Activated CD4-positive, alpha-beta T cell treated with anti-CD3 and anti-CD28 coated beads for 36 hours (primary cell): ENCODE measurements at regions of chr17 and their contacts with region 1.

Region 1: DNA sequence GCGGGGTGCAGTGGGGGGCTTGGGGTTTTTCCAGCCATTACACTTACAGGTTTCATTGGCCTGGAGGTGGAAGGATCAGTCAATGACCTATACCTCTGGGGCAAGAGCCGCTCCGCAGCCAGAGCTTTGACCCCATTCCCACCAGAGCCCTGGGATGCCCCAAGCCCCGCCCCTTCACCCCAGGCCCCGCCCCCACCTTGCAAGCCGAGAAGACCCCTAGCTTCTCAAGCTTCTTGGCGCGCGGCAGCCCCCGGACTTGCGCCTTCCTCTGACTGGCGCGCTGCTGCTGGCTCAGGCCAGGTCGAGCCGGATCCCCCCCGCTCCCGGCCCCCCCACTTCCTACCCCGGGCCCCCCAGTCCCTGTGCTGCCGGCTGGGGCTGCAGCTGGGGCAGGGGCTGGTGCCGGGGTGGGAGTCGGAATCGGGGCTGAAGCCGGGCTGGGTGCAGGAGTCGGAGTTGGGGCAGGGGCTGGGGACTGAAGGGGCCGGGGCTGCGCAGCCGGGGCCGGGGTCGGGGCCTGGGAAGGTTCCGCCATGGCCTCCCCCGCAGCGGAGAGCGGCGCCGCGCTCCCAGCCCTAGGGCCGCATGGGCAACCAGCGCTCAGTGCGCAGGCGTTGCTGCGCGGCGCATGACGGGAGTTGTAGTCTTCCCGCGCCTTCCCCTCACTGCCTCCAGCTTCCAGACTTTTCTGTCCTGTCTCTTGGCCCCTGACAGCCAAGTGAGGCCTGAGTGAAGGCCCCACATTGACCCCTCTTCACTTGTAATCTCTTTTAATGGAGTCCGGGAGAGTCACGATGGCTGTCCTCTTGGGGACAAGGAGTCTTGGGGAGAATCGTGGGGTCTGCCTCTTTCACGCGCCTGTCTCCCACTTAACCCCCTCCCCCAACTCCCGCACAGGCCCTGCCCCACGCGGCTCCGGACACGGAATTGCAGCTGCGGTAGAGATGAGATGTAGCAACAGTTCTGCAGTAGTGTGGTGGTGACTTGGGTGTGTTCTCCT is at the start of gene KAT2A:
- DNase-seq: peak; percentile 90
- ATAC-seq: peak; percentile 93
- H3K4me3 Mint-ChIP-seq: peak within 1 kb of the TSS; percentile 70
- H3K27ac Mint-ChIP-seq: peak within 1 kb of the TSS; percentile 76
- H3K4me1 Mint-ChIP-seq: peaks cover 29% of the 10 kb centered on the region
- H3K27me3 Mint-ChIP-seq: no peaks in the 10 kb centered on the region
- total RNA-seq, gene KAT2A: 46.2 to 54.8 TPM

Region 2: GRCh38 chr17:41930009-41930832 is 190.8 kb before region 1 on chr17 and contains the start of gene ODAD4:
- CTCF ChIA-PET with region 1: no interaction called
- POLR2A ChIA-PET with region 1: no interaction called
- intact Hi-C with region 1: loop called in 1 of 2 experiments (anchors 1 kb)
- DNase-seq: peak; percentile 98
- ATAC-seq: peak; percentile 99
- H3K4me3 Mint-ChIP-seq: peak within 1 kb of the TSS; percentile 96
- H3K27ac Mint-ChIP-seq: peak within 1 kb of the TSS; percentile 98
- H3K4me1 Mint-ChIP-seq: peaks cover 21% of the 10 kb centered on the region
- H3K27me3 Mint-ChIP-seq: no peaks in the 10 kb centered on the region
- total RNA-seq, gene ODAD4: 0.81 to 1.1 TPM

Region 3: GRCh38 chr17:42405963-42406495 is 285.0 kb after region 1 on chr17:
- CTCF ChIA-PET with region 1: no interaction called
- POLR2A ChIA-PET with region 1: no interaction called
- intact Hi-C with region 1: loop called in 1 of 2 experiments (anchors 1 kb)
- DNase-seq: peak; percentile 91
- ATAC-seq: peak; percentile 69
- H3K4me3 Mint-ChIP-seq: no peak overlapping the region
- H3K27ac Mint-ChIP-seq: no peak overlapping the region
- H3K4me1 Mint-ChIP-seq: peaks cover 19% of the 10 kb centered on the region
- H3K27me3 Mint-ChIP-seq: no peaks in the 10 kb centered on the region

Region 4: DNA sequence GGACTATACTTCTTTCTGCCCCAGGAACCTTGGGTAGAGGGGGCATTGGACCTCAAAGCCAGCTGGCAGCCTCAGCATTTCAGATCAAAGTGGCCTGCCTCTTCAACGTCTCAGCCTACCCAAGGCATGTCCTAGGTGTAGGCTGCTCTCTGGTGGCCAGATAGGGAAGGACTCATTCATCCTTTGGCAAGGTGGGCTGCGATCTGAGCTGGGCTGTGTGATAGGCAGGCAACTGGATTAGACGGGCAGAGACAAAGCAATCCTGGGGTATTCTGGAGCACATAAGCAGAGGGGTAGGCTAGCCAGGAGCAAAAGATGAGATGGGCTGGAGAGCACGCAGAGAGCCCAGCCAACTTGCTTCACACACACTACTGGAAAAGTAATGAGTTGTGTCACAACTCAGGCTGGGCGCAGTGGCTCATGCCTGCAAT is 406.2 kb after region 1 on chr17:
- CTCF ChIA-PET with region 1: no interaction called
- POLR2A ChIA-PET with region 1: no interaction called
- intact Hi-C with region 1: loop called in 1 of 2 experiments (anchors 1 kb)
- DNase-seq: peak; percentile 82
- ATAC-seq: peak; percentile 82
- H3K4me3 Mint-ChIP-seq: no peak overlapping the region
- H3K27ac Mint-ChIP-seq: no peak overlapping the region
- H3K4me1 Mint-ChIP-seq: peaks cover 37% of the 10 kb centered on the region
- H3K27me3 Mint-ChIP-seq: no peaks in the 10 kb centered on the region